ENCODE measurements at regions of chr2 and their contacts with region 1.

Region 1: GRCh38 chr2:54106631-54107454 is 8.6 kb upstream of the ACYP2 start:
- DNase-seq: peak in 2 of 4 donors; percentile 31 to 60
- ATAC-seq: peak; percentile 79
- H3K4me3 ChIP-seq: no peak overlapping the region
- H3K27ac ChIP-seq: no peak overlapping the region
- H3K4me1 ChIP-seq: no peaks in the 10 kb centered on the region
- H3K27me3 ChIP-seq: no peaks in the 10 kb centered on the region
- CTCF ChIP-seq: peak; percentile 48 to 64

Region 2: DNA sequence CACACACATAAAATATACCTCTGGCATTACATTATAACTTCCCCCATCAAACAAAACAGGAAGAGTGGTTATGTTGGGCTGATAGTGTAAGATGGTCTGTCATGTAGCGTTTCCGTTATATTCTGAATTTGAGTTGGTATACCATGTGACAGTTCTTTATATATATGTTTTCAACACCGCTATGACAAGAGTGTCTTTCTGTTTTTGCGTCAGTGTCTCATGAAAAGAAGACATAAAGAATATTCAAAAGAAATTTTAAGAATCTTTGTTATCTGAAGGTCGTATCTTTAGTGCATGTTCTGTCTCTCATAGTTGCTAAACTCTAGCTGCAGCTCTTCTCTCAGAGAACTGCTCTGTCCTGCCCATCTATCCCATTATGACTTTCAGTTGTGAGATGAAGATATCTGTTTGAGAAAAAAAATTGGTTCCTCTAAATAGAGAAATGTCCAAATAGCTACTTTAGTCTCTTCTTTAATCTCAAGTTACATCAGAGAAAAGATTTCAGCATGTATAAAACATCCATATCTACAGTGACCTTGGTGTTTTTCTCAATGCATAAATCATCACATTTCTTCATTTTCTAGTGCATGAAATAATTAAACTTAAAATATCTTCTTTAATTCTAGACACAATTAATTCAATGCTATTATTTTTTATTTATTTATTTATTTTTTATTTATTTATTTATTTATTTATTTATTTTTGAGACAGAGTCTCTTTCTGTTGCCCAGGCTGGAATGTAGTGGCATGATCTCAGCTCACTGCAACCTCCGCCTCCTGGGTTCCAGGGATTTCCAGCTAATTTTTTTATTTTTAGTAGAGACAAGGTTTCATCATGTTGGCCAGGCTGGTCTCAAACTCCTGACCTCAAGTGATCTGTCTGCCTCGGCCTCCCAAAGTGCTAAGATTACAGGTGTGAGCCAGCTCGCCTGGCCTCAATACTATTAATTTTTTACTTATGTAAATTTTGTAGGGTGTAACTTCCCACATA is 111.7 kb before region 1 on chr2:
- intact Hi-C with region 1: no loop called
- DNase-seq: no peak
- ATAC-seq: peak; percentile 57
- H3K4me3 ChIP-seq: no peak overlapping the region
- H3K27ac ChIP-seq: peak overlapping the region in 1 of 2 donors; percentile 30
- H3K4me1 ChIP-seq: peaks cover 0 to 5% of the 10 kb centered on the region in 2 donors
- H3K27me3 ChIP-seq: no peaks in the 10 kb centered on the region
- CTCF ChIP-seq: no peak

Region 3: DNA sequence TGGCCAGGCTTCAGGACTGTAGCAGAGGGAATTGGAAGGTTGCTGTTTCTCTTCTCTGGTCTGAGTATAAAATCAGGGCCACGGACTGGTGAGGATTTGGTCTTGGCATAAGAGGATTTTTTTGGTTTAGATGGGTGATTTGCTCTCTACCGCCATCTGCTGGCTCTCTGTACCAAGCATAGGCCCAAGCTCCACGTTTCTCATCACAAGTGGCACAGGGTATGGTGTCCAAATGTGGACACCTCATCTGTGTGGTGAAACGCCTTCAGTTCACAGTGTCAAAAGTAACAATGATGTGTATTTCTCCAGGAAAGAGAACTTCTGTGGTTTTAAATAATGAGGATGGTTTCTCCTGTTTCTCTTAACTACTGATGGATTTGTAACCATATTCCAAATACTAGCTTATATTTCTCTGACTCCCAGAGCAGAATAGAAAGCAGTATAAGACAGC is 731.8 kb after region 1 on chr2:
- intact Hi-C with region 1: loop called in 1 of 2 experiments (anchors 10 kb)
- DNase-seq: peak in 3 of 4 donors; percentile 34 to 70 (median 48)
- ATAC-seq: peak; percentile 94
- H3K4me3 ChIP-seq: no peak overlapping the region
- H3K27ac ChIP-seq: no peak overlapping the region
- H3K4me1 ChIP-seq: no peaks in the 10 kb centered on the region
- H3K27me3 ChIP-seq: no peaks in the 10 kb centered on the region
- CTCF ChIP-seq: peak; percentile 89 to 91

Measured in left lung (tissue), 14 donors.